CD8-positive, alpha-beta T cell (primary cell): ENCODE measurements at regions of chr1 and their contacts with region 1.

Region 1: GRCh38 chr1:151254217-151255213 is at the start of gene PSMD4:
- DNase-seq: peak; percentile 86 to 98 (median 93)
- ATAC-seq: peak; percentile 89
- H3K4me3 ChIP-seq: peak within 1 kb of the TSS; percentile 66 to 90
- H3K4me3 Mint-ChIP-seq: peak within 1 kb of the TSS; percentile 98
- H3K27ac ChIP-seq: peak within 1 kb of the TSS; percentile 53 to 81
- H3K27ac Mint-ChIP-seq: peak within 1 kb of the TSS; percentile 98
- H3K4me1 ChIP-seq: peaks cover 10% of the 10 kb centered on the region
- H3K4me1 Mint-ChIP-seq: peaks cover 32% of the 10 kb centered on the region
- H3K27me3 ChIP-seq: no peaks in the 10 kb centered on the region
- H3K27me3 Mint-ChIP-seq: no peaks in the 10 kb centered on the region
- CTCF ChIP-seq: no peak
- total RNA-seq, gene PSMD4: 55.1 to 56.7 TPM

Region 2: GRCh38 chr1:151008190-151008860 is 246.2 kb before region 1 on chr1 and contains the start of gene PRUNE1:
- CTCF ChIA-PET with region 1: no interaction called
- POLR2A ChIA-PET with region 1: no interaction called
- intact Hi-C with region 1: loop called in 1 of 2 experiments (anchors 1 kb)
- DNase-seq: peak; percentile 92 to 100 (median 97)
- ATAC-seq: peak; percentile 92
- H3K4me3 ChIP-seq: peak within 1 kb of the TSS; percentile 78 to 83
- H3K4me3 Mint-ChIP-seq: peak within 1 kb of the TSS; percentile 96
- H3K27ac ChIP-seq: peak within 1 kb of the TSS; percentile 76 to 95
- H3K27ac Mint-ChIP-seq: peak within 1 kb of the TSS; percentile 97
- H3K4me1 ChIP-seq: peaks cover 59% of the 10 kb centered on the region
- H3K4me1 Mint-ChIP-seq: peaks cover 83% of the 10 kb centered on the region
- H3K27me3 ChIP-seq: no peaks in the 10 kb centered on the region
- H3K27me3 Mint-ChIP-seq: no peaks in the 10 kb centered on the region
- CTCF ChIP-seq: no peak
- total RNA-seq, gene PRUNE1: 8.0 to 9.0 TPM

Region 3: GRCh38 chr1:151106894-151107293 is 147.6 kb before region 1 on chr1:
- CTCF ChIA-PET with region 1: interaction called, 19 read pairs
- POLR2A ChIA-PET with region 1: no interaction called
- intact Hi-C with region 1: no loop called
- DNase-seq: no peak
- ATAC-seq: no peak
- H3K4me3 ChIP-seq: no peak overlapping the region
- H3K4me3 Mint-ChIP-seq: no peak overlapping the region
- H3K27ac ChIP-seq: no peak overlapping the region
- H3K27ac Mint-ChIP-seq: no peak overlapping the region
- H3K4me1 ChIP-seq: no peaks in the 10 kb centered on the region
- H3K4me1 Mint-ChIP-seq: no peaks in the 10 kb centered on the region
- H3K27me3 ChIP-seq: no peaks in the 10 kb centered on the region
- H3K27me3 Mint-ChIP-seq: no peaks in the 10 kb centered on the region
- CTCF ChIP-seq: no peak

Region 4: GRCh38 chr1:151189638-151190445 is 64.7 kb before region 1 on chr1 and contains the start of gene VPS72:
- CTCF ChIA-PET with region 1: interaction called, 10 read pairs
- POLR2A ChIA-PET with region 1: interaction called, 6 read pairs
- intact Hi-C with region 1: loop called in 1 of 2 experiments (anchors 1 kb)
- DNase-seq: peak; percentile 58 to 94 (median 85)
- ATAC-seq: peak; percentile 91
- H3K4me3 ChIP-seq: peak within 1 kb of the TSS; percentile 78 to 89
- H3K4me3 Mint-ChIP-seq: peak within 1 kb of the TSS; percentile 100
- H3K27ac ChIP-seq: peak within 1 kb of the TSS; percentile 69 to 81
- H3K27ac Mint-ChIP-seq: peak within 1 kb of the TSS; percentile 99
- H3K4me1 ChIP-seq: peaks cover 18% of the 10 kb centered on the region
- H3K4me1 Mint-ChIP-seq: peaks cover 37% of the 10 kb centered on the region
- H3K27me3 ChIP-seq: no peaks in the 10 kb centered on the region
- H3K27me3 Mint-ChIP-seq: no peaks in the 10 kb centered on the region
- CTCF ChIP-seq: no peak
- total RNA-seq, gene VPS72: 7.0 to 12.1 TPM

Region 5: DNA sequence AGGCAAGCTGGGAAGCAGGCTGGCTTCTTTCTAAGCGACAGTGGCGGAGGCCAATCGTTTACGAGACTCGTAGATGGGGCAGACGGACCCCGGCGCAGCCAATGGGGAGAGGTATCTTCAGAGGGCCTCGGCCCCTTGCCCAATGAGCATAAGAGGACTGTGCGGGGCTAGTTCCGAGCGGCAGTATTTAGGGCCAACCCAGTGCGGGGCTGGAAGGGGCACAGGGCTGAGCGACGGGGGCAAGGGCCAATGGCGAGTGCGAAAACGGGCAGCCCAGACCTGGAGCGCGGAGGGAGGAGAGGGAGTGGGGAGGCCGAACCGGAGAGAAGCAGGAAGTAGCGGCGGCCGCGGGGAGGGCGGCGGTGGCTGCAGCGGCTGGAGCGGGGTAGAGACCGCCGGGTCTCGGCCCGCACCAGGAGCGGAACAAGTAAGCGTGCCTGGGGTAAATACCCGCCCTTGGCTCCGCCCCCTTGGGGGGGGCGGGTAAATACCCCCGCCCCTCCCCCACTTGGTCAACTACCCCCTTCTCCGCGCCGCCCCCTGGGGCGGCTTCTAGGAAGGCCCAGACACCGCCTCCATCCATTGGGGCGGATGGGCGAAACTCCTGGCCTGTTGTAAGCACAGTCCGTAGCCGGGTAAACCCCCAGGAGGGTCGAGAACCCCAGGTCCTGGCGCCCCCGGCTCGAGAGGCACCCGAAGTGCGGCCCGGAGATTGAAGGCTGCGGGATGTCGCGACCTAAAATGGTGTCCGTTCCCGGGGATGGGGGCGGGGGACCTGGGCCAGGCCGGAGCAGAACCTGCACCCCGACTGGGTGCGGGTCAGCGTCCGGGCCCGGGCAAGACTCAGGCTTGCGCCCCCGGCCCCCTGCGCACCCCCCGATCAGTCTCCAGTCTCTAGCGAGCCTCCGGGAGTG is 27.7 kb after region 1 on chr1 and contains the start of gene ZNF687:
- CTCF ChIA-PET with region 1: interaction called, 3 read pairs
- POLR2A ChIA-PET with region 1: interaction called, 4 read pairs
- intact Hi-C with region 1: loop called (anchors 1 kb)
- DNase-seq: peak; percentile 95 to 100 (median 98)
- ATAC-seq: peak; percentile 84
- H3K4me3 ChIP-seq: peak within 1 kb of the TSS; percentile 72 to 89
- H3K4me3 Mint-ChIP-seq: peak within 1 kb of the TSS; percentile 99
- H3K27ac ChIP-seq: peak within 1 kb of the TSS; percentile 91 to 94
- H3K27ac Mint-ChIP-seq: peak within 1 kb of the TSS; percentile 98
- H3K4me1 ChIP-seq: peaks cover 21% of the 10 kb centered on the region
- H3K4me1 Mint-ChIP-seq: peaks cover 28% of the 10 kb centered on the region
- H3K27me3 ChIP-seq: no peaks in the 10 kb centered on the region
- H3K27me3 Mint-ChIP-seq: no peaks in the 10 kb centered on the region
- CTCF ChIP-seq: no peak
- total RNA-seq, gene ZNF687: 34.0 to 36.3 TPM

Region 6: DNA sequence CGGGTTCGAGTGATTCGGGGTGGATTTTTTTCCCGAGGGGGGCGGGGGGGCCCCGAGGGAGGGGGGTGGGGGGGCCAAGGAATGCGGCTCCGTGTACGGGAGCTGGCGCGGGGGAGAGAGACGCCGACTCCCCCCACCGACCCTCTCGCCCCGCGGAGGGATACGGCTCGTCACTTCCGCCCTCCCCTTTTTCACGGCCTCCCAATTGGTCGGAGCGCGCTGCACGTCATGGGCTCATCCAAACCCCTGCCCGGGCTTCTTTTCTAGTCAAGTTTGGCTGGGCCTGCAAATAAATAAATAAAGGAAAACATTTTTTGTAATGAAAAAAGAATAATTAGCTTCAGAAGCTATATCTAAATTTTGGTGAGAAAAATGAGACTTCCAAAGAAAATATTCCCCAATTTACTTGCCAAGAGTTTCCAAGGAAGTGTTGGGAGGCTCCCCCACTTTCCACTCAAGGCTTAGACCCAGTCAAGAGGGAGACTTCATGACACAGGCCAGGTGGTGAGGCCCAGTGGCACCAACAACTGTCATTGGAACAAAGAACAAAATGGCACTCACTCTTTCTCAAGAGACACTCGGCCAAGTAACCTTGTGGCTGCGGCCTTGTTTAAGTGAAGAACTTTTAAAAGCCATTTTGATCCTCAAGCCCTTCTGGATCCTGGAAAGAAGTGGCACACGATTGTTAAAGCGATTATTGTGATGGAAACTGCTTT is 205.0 kb after region 1 on chr1 and contains the start of gene POGZ:
- CTCF ChIA-PET with region 1: no interaction called
- POLR2A ChIA-PET with region 1: no interaction called
- intact Hi-C with region 1: no loop called
- DNase-seq: peak; percentile 89 to 97 (median 95)
- ATAC-seq: peak; percentile 69
- H3K4me3 ChIP-seq: peak within 1 kb of the TSS; percentile 75 to 79
- H3K4me3 Mint-ChIP-seq: peak within 1 kb of the TSS; percentile 89
- H3K27ac ChIP-seq: peak within 1 kb of the TSS; percentile 73 to 88
- H3K27ac Mint-ChIP-seq: peak within 1 kb of the TSS; percentile 93
- H3K4me1 ChIP-seq: peaks cover 18% of the 10 kb centered on the region
- H3K4me1 Mint-ChIP-seq: peaks cover 29% of the 10 kb centered on the region
- H3K27me3 ChIP-seq: peaks cover 0 to 1% of the 10 kb centered on the region in 2 experiments
- H3K27me3 Mint-ChIP-seq: peaks cover 24% of the 10 kb centered on the region
- CTCF ChIP-seq: no peak
- total RNA-seq, gene POGZ: 85.4 to 88.0 TPM

Region 7: GRCh38 chr1:151611832-151612500 is 357.5 kb after region 1 on chr1 and contains the start of gene SNX27:
- CTCF ChIA-PET with region 1: no interaction called
- POLR2A ChIA-PET with region 1: no interaction called
- intact Hi-C with region 1: loop called in 1 of 2 experiments (anchors 5 kb)
- DNase-seq: peak; percentile 74 to 95 (median 87)
- ATAC-seq: peak; percentile 89
- H3K4me3 ChIP-seq: peak within 1 kb of the TSS; percentile 64 to 93
- H3K4me3 Mint-ChIP-seq: peak within 1 kb of the TSS; percentile 99
- H3K27ac ChIP-seq: peak within 1 kb of the TSS; percentile 54 to 59
- H3K27ac Mint-ChIP-seq: peak within 1 kb of the TSS; percentile 95
- H3K4me1 ChIP-seq: peaks cover 16% of the 10 kb centered on the region
- H3K4me1 Mint-ChIP-seq: peaks cover 38% of the 10 kb centered on the region
- H3K27me3 ChIP-seq: no peaks in the 10 kb centered on the region
- H3K27me3 Mint-ChIP-seq: peaks cover 4% of the 10 kb centered on the region
- CTCF ChIP-seq: no peak
- total RNA-seq, gene SNX27: 9.8 to 12.2 TPM

Region 8: GRCh38 chr1:152096121-152096865 is 841.8 kb after region 1 on chr1:
- CTCF ChIA-PET with region 1: no interaction called
- POLR2A ChIA-PET with region 1: no interaction called
- intact Hi-C with region 1: no loop called
- DNase-seq: no peak
- ATAC-seq: no peak
- H3K4me3 ChIP-seq: no peak overlapping the region
- H3K4me3 Mint-ChIP-seq: no peak overlapping the region
- H3K27ac ChIP-seq: no peak overlapping the region
- H3K27ac Mint-ChIP-seq: no peak overlapping the region
- H3K4me1 ChIP-seq: no peaks in the 10 kb centered on the region
- H3K4me1 Mint-ChIP-seq: no peaks in the 10 kb centered on the region
- H3K27me3 ChIP-seq: peaks cover 0 to 5% of the 10 kb centered on the region in 2 experiments
- H3K27me3 Mint-ChIP-seq: peaks cover 42% of the 10 kb centered on the region
- CTCF ChIP-seq: no peak